Activated CD4-positive, alpha-beta memory T cell treated with anti-CD3 and anti-CD28 coated beads, Interleukin-2, amount 10 ng/mL, durations not matched to agents 7 days and 5 days (primary cell): ENCODE measurements at regions of chr2 and their contacts with region 1.

Region 1: GRCh38 chr2:68157402-68158133 is at the start of gene PNO1:
- DNase-seq: peak; percentile 97
- H3K4me3 Mint-ChIP-seq: peak within 1 kb of the TSS; percentile 94
- H3K27ac Mint-ChIP-seq: peak within 1 kb of the TSS; percentile 97
- H3K4me1 Mint-ChIP-seq: peaks cover 42% of the 10 kb centered on the region
- H3K27me3 Mint-ChIP-seq: no peaks in the 10 kb centered on the region
- total RNA-seq, gene PNO1: 8.0 to 8.5 TPM

Region 2: DNA sequence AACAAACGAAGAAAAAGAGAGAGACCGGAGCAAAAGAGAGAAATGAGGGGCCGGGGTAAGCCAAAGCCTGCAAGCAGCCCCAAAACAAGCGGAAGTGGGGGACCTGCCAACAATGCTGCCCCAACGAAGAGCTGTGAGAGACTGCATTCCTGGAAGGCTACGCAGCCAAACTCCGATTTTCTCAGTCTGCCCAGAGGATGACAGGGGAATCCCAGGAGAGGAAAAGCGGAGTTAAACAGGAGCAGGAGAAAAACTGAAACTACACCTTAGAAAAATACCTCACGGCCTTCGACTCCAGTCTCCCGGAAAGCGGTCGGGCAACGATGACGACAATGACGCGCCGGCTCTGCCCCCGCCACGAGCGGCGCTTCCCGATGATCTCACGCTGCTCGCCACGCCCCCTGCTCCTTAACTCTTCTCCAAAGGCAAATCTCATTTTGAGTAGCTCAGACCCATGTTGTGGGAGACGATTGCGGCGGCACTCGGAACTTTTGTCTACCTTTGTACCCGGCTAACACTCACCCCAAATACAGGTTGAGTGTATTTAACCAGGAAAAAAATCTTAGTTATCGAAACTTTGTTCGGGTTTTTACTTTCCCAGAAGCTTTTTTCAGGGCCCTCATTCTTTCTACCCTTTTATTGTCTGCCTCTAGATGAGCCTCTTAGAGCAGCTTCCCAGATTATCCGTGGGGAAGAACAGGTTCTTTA is 94.7 kb before region 1 on chr2 and contains the start of gene C1D:
- CTCF ChIA-PET with region 1: interaction called, 4 read pairs
- POLR2A ChIA-PET with region 1: interaction called, 11 read pairs
- DNase-seq: peak; percentile 94
- H3K4me3 Mint-ChIP-seq: peak within 1 kb of the TSS; percentile 94
- H3K27ac Mint-ChIP-seq: peak within 1 kb of the TSS; percentile 92
- H3K4me1 Mint-ChIP-seq: peaks cover 28% of the 10 kb centered on the region
- H3K27me3 Mint-ChIP-seq: peaks cover 19% of the 10 kb centered on the region
- total RNA-seq, gene C1D: 18.0 to 18.4 TPM

Region 3: GRCh38 chr2:68169297-68169696 is 11.7 kb after region 1 on chr2:
- CTCF ChIA-PET with region 1: interaction called, 5 read pairs
- POLR2A ChIA-PET with region 1: interaction called, 13 read pairs
- DNase-seq: no peak
- H3K4me3 Mint-ChIP-seq: no peak overlapping the region
- H3K27ac Mint-ChIP-seq: no peak overlapping the region
- H3K4me1 Mint-ChIP-seq: peaks cover 6% of the 10 kb centered on the region
- H3K27me3 Mint-ChIP-seq: no peaks in the 10 kb centered on the region

Region 4: GRCh38 chr2:68214381-68214780 is 56.8 kb after region 1 on chr2:
- CTCF ChIA-PET with region 1: no interaction called
- POLR2A ChIA-PET with region 1: no interaction called
- DNase-seq: no peak
- H3K4me3 Mint-ChIP-seq: no peak overlapping the region
- H3K27ac Mint-ChIP-seq: no peak overlapping the region
- H3K4me1 Mint-ChIP-seq: peaks cover 25% of the 10 kb centered on the region
- H3K27me3 Mint-ChIP-seq: no peaks in the 10 kb centered on the region

Region 5: GRCh38 chr2:68251187-68251854 is 93.8 kb after region 1 on chr2:
- CTCF ChIA-PET with region 1: interaction called, 4 read pairs
- POLR2A ChIA-PET with region 1: interaction called, 43 read pairs
- DNase-seq: peak; percentile 83
- H3K4me3 Mint-ChIP-seq: peak overlapping the region; percentile 89
- H3K27ac Mint-ChIP-seq: peak overlapping the region; percentile 98
- H3K4me1 Mint-ChIP-seq: peaks cover 39% of the 10 kb centered on the region
- H3K27me3 Mint-ChIP-seq: no peaks in the 10 kb centered on the region